ENCODE measurements at regions of chr12 and their contacts with region 1.

Region 1: DNA sequence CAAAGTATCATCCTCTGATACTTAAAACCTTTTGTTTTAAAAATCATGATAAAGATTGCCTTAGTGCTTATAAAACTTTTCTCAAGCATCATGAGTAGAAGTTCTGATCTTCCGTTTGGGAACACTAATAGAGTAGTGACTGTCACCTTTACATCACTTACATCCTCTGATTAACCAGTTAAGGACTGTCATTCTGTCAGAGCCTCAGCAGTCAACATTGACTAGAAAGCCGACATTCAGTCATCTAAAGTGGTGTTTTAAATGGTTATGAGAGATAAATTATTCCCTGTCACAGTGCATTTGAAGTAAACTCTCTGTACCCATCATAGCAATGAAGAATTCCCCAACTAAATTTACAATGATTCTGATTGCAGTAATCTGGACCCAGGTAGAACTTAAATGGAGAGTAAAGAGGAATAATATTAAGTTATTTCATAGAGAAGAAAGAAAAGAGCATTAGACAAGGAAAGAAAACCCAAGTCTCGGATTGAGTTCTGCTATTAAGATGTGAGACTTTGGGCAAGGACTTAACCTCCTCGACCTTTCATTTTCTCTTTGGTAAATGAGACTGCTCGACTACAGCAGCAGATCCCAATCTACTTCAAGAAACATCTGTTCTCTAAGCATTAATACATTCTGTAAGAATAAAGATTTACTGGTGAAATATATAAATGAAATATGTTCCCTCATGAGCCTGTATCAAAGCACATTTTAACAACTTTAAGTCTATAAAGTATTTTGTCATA is 563.9 kb upstream of the LMO3 start:
- DNase-seq: no peak
- H3K4me3 Mint-ChIP-seq: no peak overlapping the region
- H3K27ac Mint-ChIP-seq: no peak overlapping the region
- H3K4me1 Mint-ChIP-seq: no peaks in the 10 kb centered on the region
- H3K27me3 Mint-ChIP-seq: no peaks in the 10 kb centered on the region

Region 2: DNA sequence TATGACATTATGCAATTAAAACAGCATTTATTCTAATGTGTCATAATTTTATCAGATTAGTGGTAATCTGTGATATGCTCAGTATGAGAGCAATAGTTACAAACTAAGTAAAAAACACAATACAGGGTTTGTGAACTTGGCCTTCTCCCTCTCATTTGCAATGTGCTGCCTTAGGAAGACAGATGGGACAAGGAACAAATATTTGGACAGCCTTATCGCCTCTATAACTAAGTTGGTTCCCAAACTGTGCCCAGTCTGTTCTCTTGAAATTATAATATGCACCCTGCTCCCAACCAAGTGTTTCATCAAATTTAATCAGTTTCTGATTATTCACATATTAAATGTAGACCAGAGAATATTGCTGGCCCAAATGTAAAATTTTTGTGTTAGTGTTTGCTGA is 799.8 kb before region 1 on chr12:
- intact Hi-C with region 1: loop called (anchors 5 kb)
- DNase-seq: no peak
- H3K4me3 Mint-ChIP-seq: no peak overlapping the region
- H3K27ac Mint-ChIP-seq: no peak overlapping the region
- H3K4me1 Mint-ChIP-seq: no peaks in the 10 kb centered on the region
- H3K27me3 Mint-ChIP-seq: no peaks in the 10 kb centered on the region

Region 3: GRCh38 chr12:17134315-17134714 is 35.6 kb before region 1 on chr12:
- intact Hi-C with region 1: no loop called
- DNase-seq: no peak
- H3K4me3 Mint-ChIP-seq: no peak overlapping the region
- H3K27ac Mint-ChIP-seq: no peak overlapping the region
- H3K4me1 Mint-ChIP-seq: no peaks in the 10 kb centered on the region
- H3K27me3 Mint-ChIP-seq: no peaks in the 10 kb centered on the region

Region 4: GRCh38 chr12:17192721-17193120 is 22.8 kb after region 1 on chr12:
- intact Hi-C with region 1: no loop called
- DNase-seq: no peak
- H3K4me3 Mint-ChIP-seq: no peak overlapping the region
- H3K27ac Mint-ChIP-seq: no peak overlapping the region
- H3K4me1 Mint-ChIP-seq: no peaks in the 10 kb centered on the region
- H3K27me3 Mint-ChIP-seq: no peaks in the 10 kb centered on the region

Region 5: DNA sequence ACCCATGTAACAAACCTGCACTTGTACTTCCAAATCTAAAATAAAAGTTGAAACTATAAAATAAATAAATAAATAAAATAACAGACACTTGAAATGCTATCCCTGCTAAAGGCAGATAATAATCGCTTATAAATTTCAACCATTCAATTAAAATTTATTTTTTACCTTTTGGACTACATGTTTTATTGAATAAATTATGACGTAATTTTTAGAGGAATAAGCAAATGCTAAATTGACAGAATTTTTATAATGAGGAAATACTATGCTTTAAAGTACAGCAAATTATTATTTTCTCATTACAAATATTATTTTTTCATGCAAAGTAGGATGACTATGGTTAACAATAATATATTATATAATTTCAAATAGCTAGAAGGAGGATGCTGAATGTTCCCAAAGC is 94.7 kb after region 1 on chr12:
- intact Hi-C with region 1: no loop called
- DNase-seq: no peak
- H3K4me3 Mint-ChIP-seq: no peak overlapping the region
- H3K27ac Mint-ChIP-seq: no peak overlapping the region
- H3K4me1 Mint-ChIP-seq: no peaks in the 10 kb centered on the region
- H3K27me3 Mint-ChIP-seq: no peaks in the 10 kb centered on the region

Measured in activated T-helper 1 cell treated with anti-CD3 and anti-CD28 coated beads, Interleukin-12 subunit alpha, Interleukin-12 subunit beta, Interleukin-2, Interleukin-4 antibody, amounts not matched to agents 30 ng/mL and 10 ng/mL and 1 ng/mL, durations not matched to agents 14 hours and 24 hours and 36 hours (primary cell).